Naive thymus-derived CD4-positive, alpha-beta T cell (primary cell): ENCODE measurements at regions of chr2 and their contacts with region 1.

Region 1: GRCh38 chr2:54115284-54116137 is at the start of gene ACYP2:
- DNase-seq: peak; percentile 76 to 93 (median 89)
- ATAC-seq: peak; percentile 88
- H3K4me3 ChIP-seq: peak within 1 kb of the TSS; percentile 89
- H3K4me3 Mint-ChIP-seq: peak within 1 kb of the TSS; percentile 92 to 98 (median 97)
- H3K27ac ChIP-seq: peak within 1 kb of the TSS; percentile 93
- H3K27ac Mint-ChIP-seq: peak within 1 kb of the TSS; percentile 98 to 100 (median 99)
- H3K4me1 ChIP-seq: peaks cover 0 to 6% of the 10 kb centered on the region in 2 donors
- H3K4me1 Mint-ChIP-seq: peaks cover 10 to 31% (median 24%) of the 10 kb centered on the region in 7 donors
- H3K27me3 ChIP-seq: no peaks in the 10 kb centered on the region
- H3K27me3 Mint-ChIP-seq: peaks cover 0 to 5% (median 0%) of the 10 kb centered on the region in 5 donors
- total RNA-seq, gene ACYP2: 12.3 to 19.6 (median 15.6) TPM

Region 2: GRCh38 chr2:53724536-53724935 is 391.0 kb before region 1 on chr2:
- CTCF ChIA-PET with region 1: no interaction called
- POLR2A ChIA-PET with region 1: no interaction called
- intact Hi-C with region 1: no loop called
- DNase-seq: no peak
- ATAC-seq: no peak
- H3K4me3 ChIP-seq: no peak overlapping the region
- H3K4me3 Mint-ChIP-seq: no peak overlapping the region
- H3K27ac ChIP-seq: no peak overlapping the region
- H3K27ac Mint-ChIP-seq: peak overlapping the region in 1 of 9 donors; percentile 72
- H3K4me1 ChIP-seq: no peaks in the 10 kb centered on the region
- H3K4me1 Mint-ChIP-seq: peaks cover 4 to 34% (median 19%) of the 10 kb centered on the region in 7 donors
- H3K27me3 ChIP-seq: no peaks in the 10 kb centered on the region
- H3K27me3 Mint-ChIP-seq: no peaks in the 10 kb centered on the region

Region 3: GRCh38 chr2:53767405-53768241 is 347.9 kb before region 1 on chr2 and contains the start of gene CHAC2:
- CTCF ChIA-PET with region 1: no interaction called
- POLR2A ChIA-PET with region 1: interaction called, 4 read pairs
- intact Hi-C with region 1: loop called (anchors 1 to 5 kb)
- DNase-seq: peak; percentile 74 to 86 (median 84)
- ATAC-seq: peak; percentile 93
- H3K4me3 ChIP-seq: peak within 1 kb of the TSS; percentile 80
- H3K4me3 Mint-ChIP-seq: peak within 1 kb of the TSS; percentile 88 to 98 (median 92)
- H3K27ac ChIP-seq: peak within 1 kb of the TSS; percentile 86
- H3K27ac Mint-ChIP-seq: peak within 1 kb of the TSS; percentile 60 to 99 (median 90)
- H3K4me1 ChIP-seq: peaks cover 0 to 8% of the 10 kb centered on the region in 2 donors
- H3K4me1 Mint-ChIP-seq: peaks cover 7 to 41% (median 33%) of the 10 kb centered on the region in 7 donors
- H3K27me3 ChIP-seq: no peaks in the 10 kb centered on the region
- H3K27me3 Mint-ChIP-seq: no peaks in the 10 kb centered on the region
- total RNA-seq, gene CHAC2: 0.29 to 12.1 (median 1.2) TPM

Region 4: DNA sequence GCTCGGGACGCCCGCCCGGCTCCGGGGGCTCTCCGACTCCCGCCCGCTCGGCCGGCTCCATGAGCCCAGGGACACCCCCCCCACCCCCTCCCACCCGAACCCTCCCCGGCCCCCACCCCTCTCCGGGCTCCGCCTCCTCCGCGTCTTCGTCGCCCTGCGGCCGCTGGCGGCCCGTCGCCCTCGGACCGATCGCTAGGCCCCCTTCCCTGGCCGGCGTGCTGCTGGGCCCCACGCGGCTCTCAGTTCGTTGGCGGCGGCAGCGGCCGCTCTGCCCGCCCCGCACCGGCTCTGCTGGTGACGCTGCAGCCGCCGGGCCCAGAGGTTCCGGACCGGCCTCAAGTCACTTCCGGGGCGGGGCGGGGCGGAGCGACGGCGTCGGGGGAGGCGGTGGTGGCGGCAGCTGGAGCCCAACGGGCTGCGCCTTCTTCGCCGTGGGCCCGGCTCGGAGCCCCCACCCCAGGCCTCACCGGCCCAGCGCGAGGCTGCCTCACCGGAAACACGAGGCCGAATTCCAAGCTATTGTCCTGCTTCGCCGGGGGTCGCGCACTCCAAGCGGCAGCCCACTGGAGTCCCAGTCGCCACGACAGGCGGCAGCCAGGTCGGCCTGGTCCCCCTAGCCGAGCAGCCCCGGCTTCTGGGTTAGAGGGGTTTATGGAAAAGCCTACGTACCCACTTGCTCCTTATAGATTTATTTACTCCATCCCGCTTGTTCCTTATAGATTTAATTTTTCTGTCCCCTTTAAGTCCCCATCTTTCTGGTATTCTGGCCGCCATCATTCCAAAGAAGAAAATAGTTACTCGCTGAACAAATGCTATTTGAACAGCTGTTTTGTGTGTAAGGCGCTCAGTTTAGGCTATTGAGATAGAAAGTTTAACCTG is 144.5 kb before region 1 on chr2 and contains the start of gene PSME4:
- CTCF ChIA-PET with region 1: interaction called, 3 read pairs
- POLR2A ChIA-PET with region 1: interaction called, 13 read pairs
- intact Hi-C with region 1: loop called (anchors 1 kb)
- DNase-seq: peak; percentile 80 to 95 (median 90)
- ATAC-seq: peak; percentile 97
- H3K4me3 ChIP-seq: peak within 1 kb of the TSS; percentile 84
- H3K4me3 Mint-ChIP-seq: peak within 1 kb of the TSS; percentile 89 to 100 (median 96)
- H3K27ac ChIP-seq: peak within 1 kb of the TSS; percentile 93
- H3K27ac Mint-ChIP-seq: peak within 1 kb of the TSS; percentile 91 to 99 (median 95)
- H3K4me1 ChIP-seq: peaks cover 17 to 21% of the 10 kb centered on the region in 2 donors
- H3K4me1 Mint-ChIP-seq: peaks cover 37 to 65% (median 54%) of the 10 kb centered on the region in 7 donors
- H3K27me3 ChIP-seq: no peaks in the 10 kb centered on the region
- H3K27me3 Mint-ChIP-seq: no peaks in the 10 kb centered on the region
- total RNA-seq, gene PSME4: 48.8 to 80.1 (median 54.4) TPM

Region 5: GRCh38 chr2:54330162-54330925 is 214.8 kb after region 1 on chr2:
- CTCF ChIA-PET with region 1: no interaction called
- POLR2A ChIA-PET with region 1: no interaction called
- intact Hi-C with region 1: loop called (anchors 1 kb)
- DNase-seq: peak; percentile 64 to 86 (median 82)
- ATAC-seq: peak; percentile 98
- H3K4me3 ChIP-seq: peak overlapping the region; percentile 74
- H3K4me3 Mint-ChIP-seq: peak overlapping the region; percentile 88 to 95 (median 91)
- H3K27ac ChIP-seq: peak overlapping the region; percentile 45
- H3K27ac Mint-ChIP-seq: peak overlapping the region; percentile 5 to 89 (median 76)
- H3K4me1 ChIP-seq: peaks cover 0 to 4% of the 10 kb centered on the region in 2 donors
- H3K4me1 Mint-ChIP-seq: peaks cover 6 to 16% (median 9%) of the 10 kb centered on the region in 7 donors
- H3K27me3 ChIP-seq: peaks cover 0 to 5% of the 10 kb centered on the region in 2 donors
- H3K27me3 Mint-ChIP-seq: peaks cover 7 to 39% (median 14%) of the 10 kb centered on the region in 5 donors

Region 6: DNA sequence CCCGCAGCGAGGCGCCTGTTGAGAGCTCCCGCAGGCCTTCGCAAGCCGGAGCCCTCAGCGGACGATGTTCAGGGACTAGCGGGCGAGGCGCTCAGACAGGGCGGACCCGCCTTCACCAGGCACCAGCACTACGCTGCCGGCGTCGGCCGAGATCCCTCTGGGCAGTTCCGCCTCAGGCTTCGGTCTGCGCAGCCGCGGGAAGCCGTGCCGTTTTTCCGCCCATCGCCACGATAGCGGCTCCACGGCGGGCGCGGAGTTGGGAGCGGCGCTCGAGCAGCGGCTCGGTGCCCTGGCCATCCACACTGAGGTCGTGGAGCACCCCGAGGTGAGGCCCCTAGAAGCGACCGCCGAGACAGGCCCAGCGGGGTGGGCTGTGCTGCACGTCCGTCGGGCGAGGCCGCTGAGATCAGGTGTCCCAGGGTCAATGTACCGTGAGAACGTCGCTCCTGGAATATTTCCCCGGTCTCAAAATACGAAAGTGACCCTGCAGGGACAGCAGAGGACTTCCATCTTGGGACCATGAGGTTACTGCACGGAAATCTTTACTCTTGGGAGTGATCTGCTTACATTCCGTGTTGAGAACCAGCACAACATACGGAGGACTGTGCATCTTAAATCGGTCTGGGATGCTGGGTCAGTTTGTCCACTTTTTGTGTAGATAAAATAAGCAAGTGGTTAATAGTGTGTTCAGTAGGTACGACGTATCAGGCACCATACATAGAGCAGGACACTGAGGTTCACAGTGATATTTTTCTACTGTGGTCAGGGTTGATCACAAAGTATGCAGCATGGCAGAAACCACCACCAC is 1166.8 kb after region 1 on chr2:
- CTCF ChIA-PET with region 1: no interaction called
- POLR2A ChIA-PET with region 1: no interaction called
- intact Hi-C with region 1: loop called in 1 of 2 experiments (anchors 10 kb)
- DNase-seq: peak; percentile 78 to 87 (median 83)
- ATAC-seq: peak; percentile 99
- H3K4me3 ChIP-seq: peak overlapping the region; percentile 80
- H3K4me3 Mint-ChIP-seq: peak overlapping the region; percentile 87 to 97 (median 92)
- H3K27ac ChIP-seq: peak overlapping the region; percentile 93
- H3K27ac Mint-ChIP-seq: peak overlapping the region; percentile 94 to 99 (median 98)
- H3K4me1 ChIP-seq: peaks cover 0 to 4% of the 10 kb centered on the region in 2 donors
- H3K4me1 Mint-ChIP-seq: peaks cover 11 to 43% (median 29%) of the 10 kb centered on the region in 7 donors
- H3K27me3 ChIP-seq: no peaks in the 10 kb centered on the region
- H3K27me3 Mint-ChIP-seq: peaks cover 0 to 2% (median 0%) of the 10 kb centered on the region in 5 donors